Left cardiac atrium (tissue), 4 donors: ENCODE measurements at regions of chr11 and their contacts with region 1.

Region 1: DNA sequence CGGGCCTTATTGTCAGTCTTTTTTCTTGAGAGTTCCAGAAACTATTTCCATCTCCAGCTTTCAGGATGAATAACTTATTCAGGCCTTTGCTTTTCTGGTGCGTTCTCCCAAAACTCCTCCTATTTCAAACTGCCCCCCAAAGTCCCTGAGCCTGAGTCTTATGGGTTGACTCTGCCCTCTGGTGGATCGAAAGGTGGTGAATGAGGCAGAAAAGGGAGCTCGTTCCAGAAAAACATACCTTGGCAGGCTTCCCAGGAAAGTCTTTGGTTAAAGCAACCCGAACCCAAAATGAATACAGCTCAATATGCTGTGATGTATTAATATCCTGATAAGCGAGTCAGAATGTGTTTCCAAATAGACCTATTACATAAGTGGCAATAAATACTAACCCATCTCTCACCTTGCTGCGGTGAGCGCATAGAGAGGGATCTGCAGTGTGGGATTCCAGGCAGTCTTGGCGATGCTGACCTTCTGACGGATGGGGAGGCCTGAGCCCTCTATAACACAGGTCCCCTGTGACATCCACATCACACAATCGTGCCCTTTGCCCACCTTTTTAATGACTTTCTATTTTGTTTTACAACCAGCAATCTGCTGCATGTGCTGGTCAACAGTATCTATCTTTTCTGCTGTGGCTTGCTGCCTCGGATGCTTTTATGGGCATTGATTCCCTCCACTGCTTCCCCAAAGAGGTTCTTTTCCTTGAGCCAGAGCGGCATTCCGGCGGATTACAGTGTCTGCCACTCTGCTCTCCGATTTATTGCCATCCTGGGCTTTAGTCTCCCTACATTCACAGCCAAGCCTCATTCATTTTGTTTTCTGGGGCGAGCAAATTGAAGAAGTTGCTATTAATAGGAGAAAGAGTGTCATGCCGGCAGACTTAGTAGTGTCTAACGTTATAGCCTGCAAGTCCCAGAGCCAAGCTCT is 756.8 kb downstream of the NTM start:
- DNase-seq: peak; percentile 70
- ATAC-seq: peak; percentile 85 to 87

Region 2: GRCh38 chr11:131867457-131868257 is 259.6 kb before region 1 on chr11:
- intact Hi-C with region 1: loop called in 1 of 2 experiments (anchors 5 kb)
- DNase-seq: peak; percentile 69
- ATAC-seq: peak; percentile 87 to 90

Region 3: DNA sequence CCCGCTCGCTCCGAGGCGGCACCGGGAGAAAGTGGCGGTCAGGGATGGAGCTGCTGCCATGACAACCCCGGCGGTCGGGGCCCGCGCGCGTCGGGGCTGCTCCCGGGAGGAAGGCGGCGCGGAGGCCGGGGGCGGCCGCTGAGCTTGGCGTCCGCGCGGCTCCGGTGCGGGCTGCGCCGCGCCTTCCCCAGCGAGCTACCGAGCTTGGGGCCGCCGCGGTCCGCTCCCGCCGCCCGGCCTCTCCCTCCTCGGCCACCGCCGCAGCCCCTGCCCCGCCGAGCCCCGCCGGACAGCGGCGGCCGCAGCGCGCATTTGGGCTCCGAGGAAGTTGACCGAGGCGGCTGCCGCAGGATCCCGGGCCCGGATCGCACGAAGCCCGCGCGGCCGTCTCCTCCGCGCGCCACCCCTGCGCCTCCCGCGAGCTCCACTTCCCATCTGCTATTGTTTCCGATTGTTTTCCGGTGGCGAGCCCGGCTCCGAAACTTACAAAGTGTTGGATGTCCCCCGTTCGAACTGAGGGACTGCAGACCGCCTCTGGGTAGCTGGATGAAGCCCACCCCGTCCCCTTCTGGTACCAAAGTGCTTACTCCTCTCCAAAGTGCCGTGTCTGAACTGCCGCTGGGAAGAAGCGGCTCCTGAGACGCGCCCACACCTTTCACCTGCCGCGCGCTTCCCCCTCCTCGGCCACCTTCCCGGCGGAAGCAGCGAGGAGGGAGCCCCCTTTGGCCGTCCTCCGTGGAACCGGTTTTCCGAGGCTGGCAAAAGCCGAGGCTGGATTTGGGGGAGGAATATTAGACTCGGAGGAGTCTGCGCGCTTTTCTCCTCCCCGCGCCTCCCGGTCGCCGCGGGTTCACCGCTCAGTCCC is 216.5 kb before region 1 on chr11:
- intact Hi-C with region 1: loop called in 1 of 2 experiments (anchors 2 kb)
- DNase-seq: no peak
- ATAC-seq: peak; percentile 45 to 62

Region 4: GRCh38 chr11:132312701-132313111 is 185.5 kb after region 1 on chr11:
- intact Hi-C with region 1: loop called in 1 of 2 experiments (anchors 10 kb)
- DNase-seq: no peak
- ATAC-seq: peak; percentile 21 to 30

Region 5: GRCh38 chr11:132402071-132402684 is 274.9 kb after region 1 on chr11:
- intact Hi-C with region 1: loop called in 1 of 2 experiments (anchors 5 kb)
- DNase-seq: no peak
- ATAC-seq: peak; percentile 78 to 90